ENCODE measurements at regions of chr7 and their contacts with region 1.

Region 1: DNA sequence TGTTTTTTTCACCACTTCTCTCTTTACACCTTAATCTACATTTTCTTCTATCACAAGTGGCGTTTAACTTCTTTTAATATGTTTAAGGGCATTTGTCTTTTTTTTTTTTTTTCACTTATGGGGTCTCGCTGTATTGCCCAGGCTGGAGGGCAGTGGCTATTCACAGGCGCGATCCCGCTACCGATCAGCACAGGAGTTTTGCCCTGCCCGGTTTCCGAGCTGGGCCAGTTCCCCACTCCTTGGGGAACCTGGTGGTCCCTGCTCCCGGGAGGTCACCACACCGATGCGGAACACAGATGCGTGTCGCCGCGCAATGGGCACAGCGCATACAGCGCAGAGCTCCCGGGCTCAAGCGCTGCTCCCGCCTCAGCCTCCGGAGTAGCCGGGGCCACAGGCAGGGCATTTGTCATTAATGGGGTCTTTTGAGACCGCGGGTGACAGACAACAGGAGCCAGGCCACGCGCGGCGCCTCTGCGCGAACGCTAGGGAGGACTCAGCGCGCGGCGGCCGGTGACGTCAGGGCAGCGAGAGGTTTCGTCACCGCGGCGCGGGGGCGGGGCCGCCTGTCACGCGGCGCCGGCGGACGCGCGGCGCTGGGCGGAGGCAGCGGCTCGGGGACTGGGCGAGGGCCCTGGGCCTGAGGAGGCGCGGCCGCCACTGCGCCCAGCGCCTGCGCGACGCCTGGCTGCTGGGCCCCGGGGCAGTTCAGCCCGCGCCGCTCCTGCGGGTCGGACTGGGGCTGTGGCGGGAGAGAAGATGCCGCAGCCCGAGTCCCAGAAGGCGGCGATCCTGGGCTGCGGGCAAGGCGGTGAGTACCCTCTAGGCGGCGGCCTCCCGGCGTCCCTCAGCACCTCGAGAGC is at the start of gene GALNT11:
- DNase-seq: peak; percentile 88
- H3K4me3 Mint-ChIP-seq: peak within 1 kb of the TSS; percentile 85
- H3K27ac Mint-ChIP-seq: peak within 1 kb of the TSS; percentile 86
- H3K4me1 Mint-ChIP-seq: peaks cover 26% of the 10 kb centered on the region
- H3K27me3 Mint-ChIP-seq: peaks cover 10% of the 10 kb centered on the region
- total RNA-seq, gene GALNT11: 20.5 and 21.2 TPM in 2 replicates

Region 2: GRCh38 chr7:151631968-151632749 is 393.1 kb before region 1 on chr7:
- intact Hi-C with region 1: loop called (anchors 5 kb)
- DNase-seq: peak; percentile 85
- H3K4me3 Mint-ChIP-seq: peak overlapping the region; percentile 94
- H3K27ac Mint-ChIP-seq: peak overlapping the region; percentile 96
- H3K4me1 Mint-ChIP-seq: peaks cover 23% of the 10 kb centered on the region
- H3K27me3 Mint-ChIP-seq: peaks cover 9% of the 10 kb centered on the region

Region 3: DNA sequence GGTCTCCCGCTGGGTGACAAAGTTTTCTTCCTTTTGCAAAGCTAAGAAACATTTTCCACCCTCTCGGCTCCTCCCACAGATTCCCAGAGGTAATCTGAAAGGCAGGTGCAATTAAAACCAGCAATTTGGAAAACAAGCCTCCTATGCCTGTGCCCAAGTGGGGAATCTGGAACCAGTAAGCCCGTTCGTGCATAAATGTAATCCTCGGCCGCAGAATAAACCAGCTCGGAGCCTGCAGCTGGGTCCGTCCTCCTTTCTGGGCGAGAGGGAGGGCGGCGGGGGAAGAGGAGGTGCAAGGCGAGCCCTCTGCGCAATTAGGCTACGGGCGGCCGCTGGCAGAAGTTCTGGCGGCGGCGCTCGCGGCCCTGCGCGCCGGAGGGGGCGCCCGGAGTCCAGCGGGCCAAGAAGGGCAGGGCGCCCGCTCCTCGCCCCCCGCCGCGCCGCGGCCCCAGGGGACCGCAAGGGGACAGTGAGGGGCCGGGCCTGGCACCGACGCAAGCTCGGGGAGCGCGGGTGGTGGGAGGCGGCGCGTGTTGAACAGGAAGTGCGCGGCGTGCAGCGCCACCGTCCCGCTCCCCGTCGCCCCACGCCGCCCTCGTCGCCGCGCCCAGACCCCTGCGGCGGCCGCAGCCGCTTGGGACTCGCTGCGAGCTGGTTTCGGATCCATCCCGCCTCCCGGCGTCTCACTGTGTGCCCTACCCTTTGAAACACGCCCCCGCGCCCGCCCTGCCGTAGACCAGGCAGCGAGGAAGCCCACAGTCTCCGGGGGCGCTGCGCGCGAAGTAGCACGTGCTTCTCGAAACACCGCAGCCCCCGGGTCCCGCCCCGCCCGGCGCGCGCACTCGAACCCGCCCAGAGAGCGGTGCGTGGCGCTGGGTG is 148.2 kb before region 1 on chr7 and contains the start of gene PRKAG2:
- intact Hi-C with region 1: loop called (anchors 1 kb)
- DNase-seq: peak; percentile 27
- H3K4me3 Mint-ChIP-seq: peak within 1 kb of the TSS; percentile 94
- H3K27ac Mint-ChIP-seq: peak within 1 kb of the TSS; percentile 71
- H3K4me1 Mint-ChIP-seq: peaks cover 6% of the 10 kb centered on the region
- H3K27me3 Mint-ChIP-seq: peaks cover 37% of the 10 kb centered on the region
- total RNA-seq, gene PRKAG2: 16.9 and 18.5 TPM in 2 replicates

Region 4: GRCh38 chr7:152145853-152146466 is 120.7 kb after region 1 on chr7:
- intact Hi-C with region 1: loop called (anchors 1 kb)
- DNase-seq: no peak
- H3K4me3 Mint-ChIP-seq: no peak overlapping the region
- H3K27ac Mint-ChIP-seq: peak overlapping the region; percentile 80
- H3K4me1 Mint-ChIP-seq: peaks cover 40% of the 10 kb centered on the region
- H3K27me3 Mint-ChIP-seq: no peaks in the 10 kb centered on the region

Region 5: GRCh38 chr7:152675759-152676636 is 650.7 kb after region 1 on chr7 and contains the start of gene XRCC2:
- intact Hi-C with region 1: loop called (anchors 5 kb)
- DNase-seq: peak; percentile 94
- H3K4me3 Mint-ChIP-seq: peak within 1 kb of the TSS; percentile 92
- H3K27ac Mint-ChIP-seq: peak within 1 kb of the TSS; percentile 95
- H3K4me1 Mint-ChIP-seq: peaks cover 25% of the 10 kb centered on the region
- H3K27me3 Mint-ChIP-seq: no peaks in the 10 kb centered on the region
- total RNA-seq, gene XRCC2: 24.0 and 24.5 TPM in 2 replicates